A549 (cell line): ENCODE measurements at regions of chr5 and their contacts with region 1.

Region 1: DNA sequence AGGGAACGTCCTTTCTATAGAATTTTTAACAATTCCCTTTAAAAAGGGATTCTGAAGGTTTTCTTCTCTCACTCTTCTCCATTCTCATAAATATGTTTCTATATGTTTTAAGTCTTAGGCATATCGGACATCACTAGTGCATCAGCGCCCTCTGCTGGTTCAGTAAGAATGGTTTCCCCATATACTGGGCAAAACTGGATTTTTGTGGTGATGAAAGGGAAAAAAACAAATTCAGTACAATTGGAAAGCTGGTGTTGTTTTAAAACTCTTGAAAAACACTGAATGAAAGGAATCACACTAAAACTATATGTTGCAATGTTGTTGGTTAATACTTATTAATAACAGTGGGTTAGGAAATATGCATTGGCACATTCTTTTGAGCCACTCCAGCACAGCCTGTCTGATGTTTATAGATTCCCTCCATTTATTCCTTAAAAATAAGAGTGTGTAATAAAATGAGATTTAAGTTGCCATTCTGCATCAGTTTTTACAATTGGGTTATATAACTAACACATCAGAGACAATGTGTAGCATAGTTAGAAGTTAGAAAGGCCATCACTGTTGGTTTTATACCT is 15.8 kb downstream of the CWC27 start:
- DNase-seq: peak; percentile 12 to 83
- ATAC-seq: peak; percentile 81 to 90
- H3K4me3 ChIP-seq: no peak overlapping the region
- H3K27ac ChIP-seq: no peak overlapping the region
- H3K4me1 ChIP-seq: no peaks in the 10 kb centered on the region
- CTCF ChIP-seq: peak; percentile 94
- EP300 ChIP-seq: no peak
- POLR2A ChIP-seq: no peak
- RAD21 ChIP-seq: peak; percentile 85 to 86

Region 2: GRCh38 chr5:64364426-64364825 is 420.1 kb before region 1 on chr5:
- CTCF ChIA-PET with region 1: no interaction called
- POLR2A ChIA-PET with region 1: no interaction called
- DNase-seq: no peak
- ATAC-seq: no peak
- H3K4me3 ChIP-seq: no peak overlapping the region
- H3K27ac ChIP-seq: no peak overlapping the region
- H3K4me1 ChIP-seq: no peaks in the 10 kb centered on the region
- CTCF ChIP-seq: no peak
- EP300 ChIP-seq: no peak
- POLR2A ChIP-seq: no peak
- RAD21 ChIP-seq: no peak

Region 3: GRCh38 chr5:64767959-64768357 is 16.6 kb before region 1 on chr5:
- CTCF ChIA-PET with region 1: interaction called, 16 read pairs
- POLR2A ChIA-PET with region 1: no interaction called
- DNase-seq: peak in 1 of 2 experiments; percentile 14
- ATAC-seq: peak; percentile 38 to 49; a peak in 5 of 6 replicates
- H3K4me3 ChIP-seq: peak overlapping the region; percentile 91
- H3K27ac ChIP-seq: peak overlapping the region; percentile 94 to 95
- H3K4me1 ChIP-seq: peaks cover 27% of the 10 kb centered on the region; the same call in 2 of the 3 replicates
- CTCF ChIP-seq: no peak
- EP300 ChIP-seq: no peak
- POLR2A ChIP-seq: no peak
- RAD21 ChIP-seq: no peak